B cell (primary cell): ENCODE measurements at regions of chr15 and their contacts with region 1.

Region 1: GRCh38 chr15:79596051-79596507 is 163.9 kb downstream of the MINAR1 start:
- DNase-seq: peak; percentile 65
- ATAC-seq: peak; percentile 58
- H3K4me3 ChIP-seq: no peak overlapping the region
- H3K4me3 Mint-ChIP-seq: no peak overlapping the region
- H3K27ac ChIP-seq: no peak overlapping the region
- H3K27ac Mint-ChIP-seq: no peak overlapping the region
- H3K4me1 ChIP-seq: no peaks in the 10 kb centered on the region
- H3K4me1 Mint-ChIP-seq: no peaks in the 10 kb centered on the region
- H3K27me3 ChIP-seq: peaks cover 0 to 9% (median 0%) of the 10 kb centered on the region in 4 experiments
- H3K27me3 Mint-ChIP-seq: peaks cover 35% of the 10 kb centered on the region
- CTCF ChIP-seq: peak; percentile 34

Region 2: DNA sequence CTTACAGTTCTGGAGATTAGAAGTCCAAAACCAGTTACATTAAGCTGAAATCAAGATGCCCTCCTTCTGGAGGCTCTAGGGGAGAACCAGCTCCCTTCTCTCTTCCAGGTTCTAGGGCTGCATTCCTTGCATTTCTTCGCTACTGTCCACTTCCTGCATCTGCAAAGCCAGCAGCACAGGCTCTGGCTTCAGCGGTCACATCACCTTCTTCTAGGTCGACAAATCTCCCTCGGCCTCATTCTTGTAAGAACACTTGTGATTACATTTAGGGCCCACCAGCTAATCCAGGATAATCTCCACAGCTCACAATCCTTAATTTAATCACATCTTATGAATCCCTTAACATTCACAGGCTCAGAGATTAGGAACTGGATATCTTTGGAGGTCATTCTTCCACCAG is 90.1 kb before region 1 on chr15:
- CTCF ChIA-PET with region 1: no interaction called
- POLR2A ChIA-PET with region 1: no interaction called
- intact Hi-C with region 1: no loop called
- DNase-seq: no peak
- ATAC-seq: no peak
- H3K4me3 ChIP-seq: no peak overlapping the region
- H3K4me3 Mint-ChIP-seq: no peak overlapping the region
- H3K27ac ChIP-seq: no peak overlapping the region
- H3K27ac Mint-ChIP-seq: no peak overlapping the region
- H3K4me1 ChIP-seq: no peaks in the 10 kb centered on the region
- H3K4me1 Mint-ChIP-seq: no peaks in the 10 kb centered on the region
- H3K27me3 ChIP-seq: peaks cover 0 to 5% (median 0%) of the 10 kb centered on the region in 4 experiments
- H3K27me3 Mint-ChIP-seq: no peaks in the 10 kb centered on the region
- CTCF ChIP-seq: no peak

Region 3: GRCh38 chr15:79837846-79838245 is 241.8 kb after region 1 on chr15:
- CTCF ChIA-PET with region 1: no interaction called
- POLR2A ChIA-PET with region 1: no interaction called
- intact Hi-C with region 1: loop called (anchors 5 kb)
- DNase-seq: no peak
- ATAC-seq: no peak
- H3K4me3 ChIP-seq: no peak overlapping the region
- H3K4me3 Mint-ChIP-seq: no peak overlapping the region
- H3K27ac ChIP-seq: no peak overlapping the region
- H3K27ac Mint-ChIP-seq: no peak overlapping the region
- H3K4me1 ChIP-seq: no peaks in the 10 kb centered on the region
- H3K4me1 Mint-ChIP-seq: peaks cover 2% of the 10 kb centered on the region
- H3K27me3 ChIP-seq: no peaks in the 10 kb centered on the region
- H3K27me3 Mint-ChIP-seq: no peaks in the 10 kb centered on the region
- CTCF ChIP-seq: no peak